Activated CD4-positive, alpha-beta memory T cell treated with anti-CD3 and anti-CD28 coated beads for 36 hours (primary cell): ENCODE measurements at regions of chr2 and their contacts with region 1.

Region 1: DNA sequence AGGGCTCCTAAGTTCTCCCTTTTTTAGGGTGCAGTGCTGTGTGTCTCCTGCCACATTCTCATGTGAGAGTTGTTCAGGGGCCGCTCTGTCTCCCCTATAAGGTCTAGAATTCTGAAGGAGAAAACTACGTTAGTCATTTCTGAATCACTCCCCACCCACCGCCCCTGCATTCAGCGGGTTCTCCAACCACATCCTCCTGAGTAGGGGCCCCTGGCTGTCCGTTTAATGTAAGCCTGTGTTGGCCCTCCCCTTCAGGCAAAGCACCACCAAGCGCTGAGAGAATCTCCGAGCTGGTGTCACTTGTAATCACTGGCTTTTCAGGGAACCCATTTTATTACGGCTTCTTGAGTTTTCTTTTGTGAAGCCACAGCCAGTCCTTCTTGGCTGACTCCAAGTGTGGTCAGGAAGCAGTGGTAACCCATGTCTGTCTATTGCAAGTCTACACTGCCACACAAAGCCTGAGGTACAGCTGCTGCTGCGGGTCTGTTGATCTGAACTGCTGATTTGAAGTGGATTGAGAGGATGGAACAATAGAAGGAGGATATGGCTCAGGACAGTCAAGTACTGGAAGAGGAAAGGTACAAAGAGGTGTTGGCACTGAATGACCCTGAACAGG is 16.9 kb downstream of the LCT start:
- DNase-seq: peak; percentile 94
- H3K4me3 Mint-ChIP-seq: peak overlapping the region; percentile 61
- H3K27ac Mint-ChIP-seq: peak overlapping the region; percentile 78
- H3K4me1 Mint-ChIP-seq: peaks cover 38% of the 10 kb centered on the region
- H3K27me3 Mint-ChIP-seq: no peaks in the 10 kb centered on the region

Region 2: GRCh38 chr2:135876066-135876711 is 56.1 kb after region 1 on chr2 and contains the start of gene MCM6:
- CTCF ChIA-PET with region 1: no interaction called
- POLR2A ChIA-PET with region 1: interaction called, 11 read pairs
- intact Hi-C with region 1: loop called (anchors 1 kb)
- DNase-seq: peak; percentile 100
- H3K4me3 Mint-ChIP-seq: peak within 1 kb of the TSS; percentile 90
- H3K27ac Mint-ChIP-seq: peak within 1 kb of the TSS; percentile 98
- H3K4me1 Mint-ChIP-seq: peaks cover 39% of the 10 kb centered on the region
- H3K27me3 Mint-ChIP-seq: peaks cover 2% of the 10 kb centered on the region
- total RNA-seq, gene MCM6: 280 to 284 TPM

Region 3: DNA sequence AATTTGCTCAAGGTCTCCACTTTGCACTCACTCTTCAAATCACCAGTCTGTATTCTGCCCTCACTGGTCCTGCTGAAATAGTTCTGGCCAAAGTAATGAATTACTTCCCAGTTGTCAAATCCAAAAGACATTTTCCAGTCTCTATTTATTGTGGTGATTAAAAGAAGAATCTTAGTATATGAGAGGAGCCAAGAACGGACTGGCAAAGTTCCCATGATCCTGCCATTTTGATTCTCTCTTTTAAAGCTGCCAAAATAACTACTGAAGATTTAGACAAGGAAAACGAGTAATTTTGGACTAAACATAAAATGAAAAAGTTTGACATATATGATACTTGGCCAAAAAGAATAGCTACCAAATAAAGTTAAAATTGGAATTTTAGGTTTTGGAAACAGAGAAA is 957.3 kb after region 1 on chr2:
- CTCF ChIA-PET with region 1: no interaction called
- POLR2A ChIA-PET with region 1: no interaction called
- intact Hi-C with region 1: loop called (anchors 5 kb)
- DNase-seq: no peak
- H3K4me3 Mint-ChIP-seq: no peak overlapping the region
- H3K27ac Mint-ChIP-seq: no peak overlapping the region
- H3K4me1 Mint-ChIP-seq: no peaks in the 10 kb centered on the region
- H3K27me3 Mint-ChIP-seq: peaks cover 5% of the 10 kb centered on the region